RWPE1 (cell line): ENCODE measurements at regions of chr16 and their contacts with region 1.

Region 1: GRCh38 chr16:82263521-82264143 is 93.6 kb upstream of the MPHOSPH6 start:
- DNase-seq: peak; percentile 66
- H3K27ac ChIP-seq: no peak overlapping the region
- CTCF ChIP-seq: peak; percentile 90

Region 2: GRCh38 chr16:82317411-82318167 is 54.0 kb after region 1 on chr16:
- CTCF ChIA-PET with region 1: no interaction called
- POLR2A ChIA-PET with region 1: no interaction called
- DNase-seq: no peak
- H3K27ac ChIP-seq: no peak overlapping the region
- CTCF ChIP-seq: no peak

Region 3: DNA sequence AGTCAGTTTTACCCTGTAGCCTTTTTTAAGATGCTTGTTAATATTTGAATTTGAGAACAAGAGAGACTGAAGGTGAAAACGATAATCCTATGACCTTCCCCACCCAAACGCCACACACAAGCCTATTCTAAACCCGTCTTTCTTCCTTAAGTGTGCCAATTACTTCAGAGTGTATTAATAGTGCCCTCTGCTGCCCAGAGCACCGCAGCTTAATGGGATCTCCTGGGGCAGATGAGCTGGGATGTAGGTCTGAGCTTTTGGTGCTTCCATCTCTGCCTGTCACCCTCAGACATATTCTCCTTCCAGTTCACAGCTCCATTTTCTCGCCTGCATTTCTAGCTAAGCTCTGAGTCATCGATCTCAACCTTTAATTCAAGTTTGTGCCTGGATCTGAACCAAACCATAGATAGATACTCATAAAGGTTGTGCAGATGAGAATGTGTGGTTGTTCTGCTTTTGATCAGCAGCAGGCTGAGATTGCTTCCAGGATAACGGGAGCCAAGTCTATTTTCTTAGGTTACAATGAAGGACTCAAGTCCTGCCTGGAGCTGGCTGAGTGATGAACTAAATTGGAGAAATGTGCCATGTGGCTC is 316.8 kb after region 1 on chr16:
- CTCF ChIA-PET with region 1: interaction called, 4 read pairs
- POLR2A ChIA-PET with region 1: interaction called, 12 read pairs
- DNase-seq: peak; percentile 41
- H3K27ac ChIP-seq: no peak overlapping the region
- CTCF ChIP-seq: no peak